IMR-90 (cell line): ENCODE measurements at regions of chr5 and their contacts with region 1.

Region 1: GRCh38 chr5:54317511-54318260 is 7.3 kb upstream of the ARL15 start:
- DNase-seq: peak; percentile 46
- ATAC-seq: peak; percentile 37
- H3K4me3 ChIP-seq: no peak overlapping the region
- H3K27ac ChIP-seq: no peak overlapping the region
- H3K4me1 ChIP-seq: no peaks in the 10 kb centered on the region
- H3K27me3 ChIP-seq: peaks cover 15% of the 10 kb centered on the region; the same call in 1 of the 2 replicates
- CTCF ChIP-seq: no peak
- POLR2A ChIP-seq: no peak
- RAD21 ChIP-seq: no peak

Region 2: DNA sequence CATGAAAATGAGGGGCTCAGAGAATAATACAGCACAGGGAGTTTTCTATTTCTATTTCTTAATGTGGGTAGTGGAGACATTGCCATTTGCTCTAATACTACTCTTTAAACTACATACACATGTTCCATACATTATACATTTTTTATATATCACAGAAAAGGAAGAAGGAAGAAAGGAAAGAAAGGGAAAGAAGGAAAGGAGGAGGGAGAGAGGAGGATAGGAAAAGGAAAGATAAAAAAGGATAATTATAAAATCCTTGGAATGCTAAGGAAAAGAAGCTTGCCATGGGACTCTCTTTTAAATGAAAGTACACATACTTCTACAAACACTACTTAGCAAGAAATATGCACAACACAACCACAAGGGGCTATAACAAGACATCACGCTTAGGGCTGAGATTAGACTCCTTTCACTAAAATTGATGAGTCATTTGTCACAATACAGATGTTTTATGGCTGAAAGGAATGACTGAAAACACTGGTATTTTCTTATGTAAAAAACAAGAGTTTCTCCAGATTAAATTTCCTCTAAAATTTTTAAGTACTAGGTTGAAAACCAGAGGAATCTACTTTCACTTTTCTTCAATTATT is 227.1 kb before region 1 on chr5:
- CTCF ChIA-PET with region 1: no interaction called
- POLR2A ChIA-PET with region 1: no interaction called
- dilution Hi-C with region 1: no loop called
- in situ Hi-C with region 1: no loop called
- intact Hi-C with region 1: no loop called
- DNase-seq: peak; percentile 85
- ATAC-seq: peak; percentile 66
- H3K4me3 ChIP-seq: 0 out of 2 replicates have a peak overlapping the region, but pooled peaks have one; percentile 1
- H3K27ac ChIP-seq: no peak overlapping the region
- H3K4me1 ChIP-seq: peaks cover 14% of the 10 kb centered on the region
- H3K27me3 ChIP-seq: no peaks in the 10 kb centered on the region
- CTCF ChIP-seq: peak; percentile 41
- POLR2A ChIP-seq: no peak
- RAD21 ChIP-seq: peak; percentile 28

Region 3: GRCh38 chr5:54401515-54401914 is 83.8 kb after region 1 on chr5:
- CTCF ChIA-PET with region 1: interaction called, 3 read pairs
- POLR2A ChIA-PET with region 1: no interaction called
- dilution Hi-C with region 1: no loop called
- in situ Hi-C with region 1: no loop called
- intact Hi-C with region 1: loop called (anchors 5 kb)
- DNase-seq: no peak
- ATAC-seq: no peak
- H3K4me3 ChIP-seq: no peak overlapping the region
- H3K27ac ChIP-seq: no peak overlapping the region
- H3K4me1 ChIP-seq: no peaks in the 10 kb centered on the region
- H3K27me3 ChIP-seq: peaks cover 9% of the 10 kb centered on the region
- CTCF ChIP-seq: no peak
- POLR2A ChIP-seq: no peak
- RAD21 ChIP-seq: no peak